GM12878 (cell line): ENCODE measurements at regions of chr2 and their contacts with region 1.

Region 1: DNA sequence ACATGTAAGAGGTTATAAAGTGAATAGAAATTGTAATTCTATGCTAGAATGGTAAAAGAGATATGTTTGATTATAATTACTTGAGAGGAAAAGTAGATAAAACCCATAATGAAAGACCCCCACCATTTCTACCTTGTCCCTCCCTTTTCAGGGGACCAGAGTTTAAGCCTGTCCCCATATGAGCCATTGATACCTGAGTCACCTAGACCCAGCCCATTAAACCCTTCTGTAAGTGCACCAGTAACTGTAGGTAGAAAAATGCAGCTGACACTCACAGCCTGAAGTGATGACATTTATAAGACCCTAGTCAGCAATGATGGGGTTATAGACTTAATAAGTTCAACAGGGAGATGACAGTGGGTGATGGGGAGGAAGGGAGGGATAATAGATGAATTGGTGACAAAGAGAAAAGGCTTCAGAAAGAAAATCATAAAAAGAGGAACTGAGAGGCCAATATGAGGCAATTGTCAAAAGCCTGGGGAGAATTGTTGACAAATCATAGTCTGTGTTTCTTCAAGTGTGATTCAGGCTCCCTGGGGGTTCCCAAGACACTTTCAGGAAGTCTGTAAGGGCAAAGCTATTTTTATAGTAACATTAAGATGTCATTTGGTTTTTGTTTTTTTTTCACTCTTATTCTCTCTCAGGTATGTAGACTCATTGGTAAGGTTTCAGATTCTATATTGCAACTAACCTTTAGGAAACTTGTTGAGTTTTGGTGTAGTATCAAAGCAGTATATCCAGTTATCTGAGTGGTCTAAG is 544.2 kb downstream of the SATB2 start:
- DNase-seq: peak; percentile 89
- ATAC-seq: peak; percentile 96
- H3K4me3 ChIP-seq: no peak overlapping the region
- H3K27ac ChIP-seq: peak overlapping the region; percentile 58
- H3K4me1 ChIP-seq: peaks cover 9% of the 10 kb centered on the region
- H3K27me3 ChIP-seq: no peaks in the 10 kb centered on the region
- CTCF ChIP-seq: no peak
- EP300 ChIP-seq: peak; percentile 97 to 98
- POLR2A ChIP-seq: no peak
- RAD21 ChIP-seq: no peak

Region 2: GRCh38 chr2:198692907-198693510 is 220.6 kb before region 1 on chr2:
- CTCF ChIA-PET with region 1: interaction called, 3 read pairs
- POLR2A ChIA-PET with region 1: no interaction called
- RAD21 ChIA-PET with region 1: interaction called, 14 read pairs
- SMC1A ChIA-PET with region 1: interaction called, 22 read pairs
- in situ Hi-C with region 1: no loop called
- intact Hi-C with region 1: no loop called
- DNase-seq: no peak
- ATAC-seq: peak; percentile 77
- H3K4me3 ChIP-seq: no peak overlapping the region
- H3K27ac ChIP-seq: no peak overlapping the region
- H3K4me1 ChIP-seq: no peaks in the 10 kb centered on the region
- H3K27me3 ChIP-seq: no peaks in the 10 kb centered on the region
- CTCF ChIP-seq: no peak
- EP300 ChIP-seq: no peak
- POLR2A ChIP-seq: no peak
- RAD21 ChIP-seq: no peak

Region 3: GRCh38 chr2:198873503-198874471 is 39.8 kb before region 1 on chr2:
- CTCF ChIA-PET with region 1: interaction called, 3 read pairs
- POLR2A ChIA-PET with region 1: no interaction called
- RAD21 ChIA-PET with region 1: interaction called, 5 read pairs
- SMC1A ChIA-PET with region 1: interaction called, 6 read pairs
- in situ Hi-C with region 1: no loop called
- intact Hi-C with region 1: loop called (anchors 1 kb)
- DNase-seq: no peak
- ATAC-seq: peak; percentile 53
- H3K4me3 ChIP-seq: no peak overlapping the region
- H3K27ac ChIP-seq: no peak overlapping the region
- H3K4me1 ChIP-seq: no peaks in the 10 kb centered on the region
- H3K27me3 ChIP-seq: no peaks in the 10 kb centered on the region
- CTCF ChIP-seq: no peak
- EP300 ChIP-seq: no peak
- POLR2A ChIP-seq: no peak
- RAD21 ChIP-seq: no peak

Region 4: GRCh38 chr2:199228887-199229819 is 315.6 kb after region 1 on chr2:
- CTCF ChIA-PET with region 1: no interaction called
- POLR2A ChIA-PET with region 1: no interaction called
- RAD21 ChIA-PET with region 1: interaction called, 3 read pairs
- SMC1A ChIA-PET with region 1: no interaction called
- in situ Hi-C with region 1: no loop called
- intact Hi-C with region 1: loop called (anchors 1 kb)
- DNase-seq: peak; percentile 93
- ATAC-seq: peak; percentile 94
- H3K4me3 ChIP-seq: no peak overlapping the region
- H3K27ac ChIP-seq: no peak overlapping the region; the same call in 1 of the 2 replicates
- H3K4me1 ChIP-seq: peaks cover 8% of the 10 kb centered on the region
- H3K27me3 ChIP-seq: no peaks in the 10 kb centered on the region
- CTCF ChIP-seq: no peak
- EP300 ChIP-seq: peak; percentile 81 to 86; a peak in 3 of 4 replicates
- POLR2A ChIP-seq: no peak
- RAD21 ChIP-seq: no peak